ENCODE measurements at regions of chr20 and their contacts with region 1.

Region 1: DNA sequence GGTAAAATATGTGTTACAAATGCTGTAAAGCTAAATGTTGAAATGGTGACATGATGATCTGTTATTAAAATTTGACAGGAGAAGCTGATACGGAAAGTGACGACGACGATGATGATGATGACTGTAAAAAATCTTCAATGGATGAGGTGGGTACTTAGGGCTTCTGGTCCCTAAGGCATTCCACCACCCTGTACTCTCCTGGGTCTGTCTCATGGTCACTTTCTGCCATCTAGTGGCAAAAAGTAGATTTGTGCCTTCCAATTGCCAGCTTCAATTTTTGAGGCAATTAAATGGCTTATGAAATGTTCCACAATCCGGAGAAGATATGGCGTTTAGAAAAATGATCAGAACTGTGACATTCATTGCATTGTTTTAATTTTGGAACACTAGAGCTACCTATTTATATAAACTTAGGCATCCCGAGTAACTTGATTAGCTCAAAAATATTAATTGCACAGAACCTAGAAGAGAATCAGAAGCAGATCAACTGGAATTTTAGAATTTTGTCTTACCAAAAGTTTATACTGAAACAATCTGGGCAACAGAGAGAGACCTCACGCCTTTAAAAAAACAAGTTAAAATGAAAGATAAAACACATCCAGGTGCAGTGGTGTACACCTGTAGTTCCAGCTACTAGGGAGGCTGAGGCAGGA is 346.5 kb upstream of the PLCB4 start:
- DNase-seq: no peak
- ATAC-seq: peak; percentile 76 to 84

Region 2: GRCh38 chr20:7935027-7935551 is 787.3 kb before region 1 on chr20:
- intact Hi-C with region 1: loop called in 1 of 2 experiments (anchors 2 kb)
- DNase-seq: no peak
- ATAC-seq: no peak

Region 3: DNA sequence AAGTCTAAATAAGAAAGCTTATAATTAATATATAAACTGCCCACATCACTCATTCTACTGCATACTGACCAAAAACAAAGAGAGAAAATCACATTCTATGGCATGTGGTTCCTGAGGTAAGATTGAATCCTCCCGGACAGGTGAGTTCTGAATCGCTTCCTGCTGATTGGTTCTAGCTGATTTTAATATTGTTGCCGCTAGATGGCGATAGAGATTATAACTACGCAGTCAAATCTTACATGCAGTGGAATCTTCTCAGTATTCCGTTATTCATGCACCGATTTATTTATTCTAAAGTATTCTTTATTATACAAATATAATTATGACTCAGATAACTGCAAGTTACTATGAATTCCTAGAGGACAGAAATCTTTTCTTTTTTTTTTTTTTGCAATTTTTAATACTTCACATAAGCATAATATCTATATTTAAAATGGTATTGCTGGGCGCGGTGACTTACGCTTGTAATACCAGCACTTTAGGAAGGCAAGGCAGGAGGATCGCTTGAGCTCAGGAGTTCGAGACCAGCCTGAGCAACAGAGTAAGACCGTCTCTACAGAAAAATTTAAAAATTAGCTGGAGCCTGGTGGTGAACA is 678.6 kb before region 1 on chr20:
- intact Hi-C with region 1: loop called (anchors 2 to 5 kb)
- DNase-seq: no peak
- ATAC-seq: peak; percentile 68 to 70

Region 4: GRCh38 chr20:8389381-8390036 is 332.9 kb before region 1 on chr20:
- intact Hi-C with region 1: loop called in 1 of 2 experiments (anchors 5 kb)
- DNase-seq: no peak
- ATAC-seq: peak; percentile 49 to 58

Region 5: DNA sequence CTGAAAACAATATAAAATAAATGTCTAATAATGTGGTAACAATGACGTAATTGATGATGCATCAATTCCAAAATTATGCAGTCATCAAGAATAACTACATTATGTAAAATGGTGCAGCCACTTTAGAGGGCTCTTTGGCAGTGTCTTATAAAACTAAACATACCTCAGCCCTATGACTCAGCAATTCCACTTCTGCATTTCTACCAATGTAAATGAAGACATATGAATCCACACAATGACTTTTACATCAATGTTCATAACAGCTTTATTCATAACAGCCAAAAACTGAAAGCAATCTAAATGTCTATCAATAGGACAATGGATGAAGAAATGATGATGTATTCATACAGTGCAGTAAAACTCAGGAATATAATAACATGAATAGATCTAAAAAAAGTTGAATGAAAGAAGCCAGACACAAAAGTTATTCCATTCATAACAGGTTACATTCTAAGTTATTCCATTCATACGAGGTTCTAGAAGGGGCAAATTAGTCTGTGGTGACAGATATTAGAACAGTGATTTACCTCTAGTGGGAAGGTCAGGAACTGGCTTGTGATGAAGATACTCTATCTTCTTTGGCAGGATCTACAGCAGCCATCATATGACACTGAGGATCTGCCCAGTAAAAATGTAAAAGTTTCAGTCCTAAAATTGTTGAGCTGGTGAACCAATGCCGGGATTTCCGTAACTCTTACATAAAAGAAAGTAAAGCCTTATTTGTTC is 194.2 kb before region 1 on chr20:
- intact Hi-C with region 1: loop called in 1 of 2 experiments (anchors 10 kb)
- DNase-seq: no peak
- ATAC-seq: no peak

Region 6: GRCh38 chr20:8689337-8689736 is 33.1 kb before region 1 on chr20:
- intact Hi-C with region 1: no loop called
- DNase-seq: no peak
- ATAC-seq: no peak